AG04449 (cell line): ENCODE measurements at regions of chr13 and their contacts with region 1.

Region 1: DNA sequence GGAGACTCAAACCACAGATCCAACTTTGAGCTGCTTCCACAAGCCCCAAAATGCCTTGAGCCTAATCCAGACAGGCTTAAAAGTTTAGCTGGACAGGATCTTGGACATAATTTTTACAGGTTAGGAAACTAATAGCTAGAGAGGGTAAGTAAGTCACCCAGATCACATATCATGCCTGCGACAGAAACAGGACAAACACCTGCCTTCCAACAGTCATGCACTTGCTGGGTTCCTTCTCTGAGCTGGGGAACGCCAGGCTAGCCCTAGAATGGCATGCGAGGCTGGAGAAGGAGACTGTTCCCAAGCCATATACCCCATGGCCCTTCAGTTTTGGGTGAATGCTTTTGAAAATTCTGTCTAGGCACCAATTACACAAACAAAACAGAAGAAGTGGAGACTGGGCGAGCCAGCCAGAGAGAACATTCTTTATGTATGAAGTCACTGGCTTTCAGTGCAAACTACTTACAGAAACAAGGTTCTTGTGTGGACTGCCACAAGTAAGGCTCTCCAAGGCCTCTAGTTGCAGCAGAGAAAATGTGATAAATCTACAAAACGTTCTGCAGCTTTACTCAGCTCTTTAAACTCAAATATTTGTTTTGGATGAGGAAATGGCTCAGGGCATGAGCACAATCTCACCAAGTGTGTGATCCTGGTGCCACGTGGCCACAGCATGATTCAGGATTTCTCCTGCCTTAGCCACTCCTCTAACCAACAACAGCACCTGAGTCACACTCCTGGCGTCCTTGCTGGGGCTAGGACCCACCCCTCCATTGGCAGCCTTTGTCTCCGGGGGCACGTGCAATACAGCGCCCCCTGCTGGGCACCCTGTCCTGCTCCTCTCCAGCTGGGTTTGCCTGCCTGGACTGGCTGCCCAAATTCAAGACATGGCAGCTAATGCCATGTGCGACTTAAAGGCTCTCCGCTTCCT is 73.4 kb upstream of the UBL3 start:
- DNase-seq: peak; percentile 97
- H3K4me3 ChIP-seq: peak overlapping the region; percentile 16; the same call in 1 of the 2 replicates
- CTCF ChIP-seq: peak; percentile 89

Region 2: DNA sequence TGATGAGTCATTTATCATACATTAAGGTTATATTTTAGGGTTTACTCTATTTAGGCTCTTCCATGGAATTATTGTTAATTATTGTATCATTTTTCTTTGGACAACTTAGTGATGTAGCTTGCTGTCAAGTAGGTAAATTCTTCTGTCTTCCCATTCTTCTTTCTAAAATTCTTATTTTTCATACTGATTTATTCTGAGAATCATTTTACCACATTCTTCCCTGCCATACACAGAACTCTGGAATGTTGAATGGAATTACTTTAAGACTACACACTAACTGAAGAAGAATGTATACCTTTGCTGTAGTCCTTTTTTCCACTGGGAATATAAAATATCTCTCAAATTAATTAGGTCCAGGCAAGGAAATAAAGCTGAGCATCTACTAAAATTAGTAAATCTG is 303.8 kb before region 1 on chr13:
- CTCF ChIA-PET with region 1: no interaction called
- POLR2A ChIA-PET with region 1: no interaction called
- DNase-seq: peak; percentile 16
- H3K4me3 ChIP-seq: no peak overlapping the region
- CTCF ChIP-seq: no peak

Region 3: GRCh38 chr13:29850224-29850898 is 73.5 kb before region 1 on chr13 and contains the start of gene UBL3:
- CTCF ChIA-PET with region 1: interaction called, 40 read pairs
- POLR2A ChIA-PET with region 1: interaction called, 7 read pairs
- DNase-seq: peak; percentile 72
- H3K4me3 ChIP-seq: peak within 1 kb of the TSS; percentile 84
- CTCF ChIP-seq: no peak

Region 4: DNA sequence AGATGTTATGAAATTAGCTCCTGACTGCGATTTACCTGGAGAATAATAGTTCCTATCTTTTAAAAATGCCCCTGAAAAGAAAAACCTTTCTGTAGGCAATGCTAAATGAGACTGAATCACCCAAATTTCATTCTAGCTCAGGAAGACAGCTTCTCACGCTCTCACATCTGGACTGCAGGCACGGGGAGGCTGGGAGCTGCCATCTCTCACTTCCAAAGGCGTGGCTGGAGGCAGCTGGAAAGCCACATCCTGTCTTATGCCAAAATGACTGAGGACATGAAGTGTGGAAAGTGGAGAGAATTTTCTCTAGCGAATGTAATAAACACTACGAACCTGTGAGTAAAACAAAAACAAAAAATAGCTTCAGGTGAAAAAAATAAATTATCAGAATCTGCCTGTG is 15.4 kb before region 1 on chr13:
- CTCF ChIA-PET with region 1: interaction called, 23 read pairs
- POLR2A ChIA-PET with region 1: interaction called, 5 read pairs
- DNase-seq: no peak
- H3K4me3 ChIP-seq: no peak overlapping the region
- CTCF ChIP-seq: no peak

Region 5: GRCh38 chr13:29946093-29946492 is 22.3 kb after region 1 on chr13:
- CTCF ChIA-PET with region 1: interaction called, 21 read pairs
- POLR2A ChIA-PET with region 1: no interaction called
- DNase-seq: no peak
- H3K4me3 ChIP-seq: no peak overlapping the region
- CTCF ChIP-seq: no peak

Region 6: GRCh38 chr13:30052120-30052519 is 128.3 kb after region 1 on chr13:
- CTCF ChIA-PET with region 1: no interaction called
- POLR2A ChIA-PET with region 1: no interaction called
- DNase-seq: no peak
- H3K4me3 ChIP-seq: no peak overlapping the region
- CTCF ChIP-seq: no peak